ENCODE measurements at regions of chr1 and their contacts with region 1.

Region 1: GRCh38 chr1:155044812-155045690 is 6.1 kb upstream of the ADAM15 start:
- DNase-seq: peak; percentile 67 to 73
- H3K4me3 ChIP-seq: no peak overlapping the region
- H3K27ac ChIP-seq: no peak overlapping the region
- H3K4me1 ChIP-seq: peaks cover 4 to 15% (median 5%) of the 10 kb centered on the region in 4 experiments; a peak in 6 of 7 replicates
- H3K27me3 ChIP-seq: no peaks in the 10 kb centered on the region; a peak in 2 of 7 replicates
- CTCF ChIP-seq: peak; percentile 76 to 86 (median 79)
- EP300 ChIP-seq: no peak
- POLR2A ChIP-seq: no peak
- RAD21 ChIP-seq: peak; percentile 70 to 76

Region 2: GRCh38 chr1:155022927-155023236 is 22.2 kb before region 1 on chr1:
- CTCF ChIA-PET with region 1: interaction called, 354 read pairs
- POLR2A ChIA-PET with region 1: interaction called, 11 read pairs
- DNase-seq: no peak
- H3K4me3 ChIP-seq: no peak overlapping the region
- H3K27ac ChIP-seq: no peak overlapping the region
- H3K4me1 ChIP-seq: peaks cover 0 to 8% (median under 1%) of the 10 kb centered on the region in 4 experiments; a peak in 4 of 7 replicates
- H3K27me3 ChIP-seq: peaks cover 0 to 3% (median under 1%) of the 10 kb centered on the region in 4 experiments; a peak in 1 of 7 replicates
- CTCF ChIP-seq: no peak
- EP300 ChIP-seq: no peak
- POLR2A ChIP-seq: no peak
- RAD21 ChIP-seq: no peak

Region 3: GRCh38 chr1:155029513-155030242 is 15.4 kb before region 1 on chr1:
- CTCF ChIA-PET with region 1: interaction called, 76 read pairs
- POLR2A ChIA-PET with region 1: interaction called, 6 read pairs
- DNase-seq: no peak
- H3K4me3 ChIP-seq: no peak overlapping the region
- H3K27ac ChIP-seq: no peak overlapping the region
- H3K4me1 ChIP-seq: peaks cover 0 to 5% (median 0%) of the 10 kb centered on the region in 4 experiments; a peak in 2 of 7 replicates
- H3K27me3 ChIP-seq: peaks cover 0 to 3% (median 1%) of the 10 kb centered on the region in 4 experiments; a peak in 1 of 7 replicates
- CTCF ChIP-seq: no peak
- EP300 ChIP-seq: no peak
- POLR2A ChIP-seq: no peak
- RAD21 ChIP-seq: no peak

Measured in H1 (cell line).